ENCODE measurements at regions of chr11 and their contacts with region 1.

Region 1: DNA sequence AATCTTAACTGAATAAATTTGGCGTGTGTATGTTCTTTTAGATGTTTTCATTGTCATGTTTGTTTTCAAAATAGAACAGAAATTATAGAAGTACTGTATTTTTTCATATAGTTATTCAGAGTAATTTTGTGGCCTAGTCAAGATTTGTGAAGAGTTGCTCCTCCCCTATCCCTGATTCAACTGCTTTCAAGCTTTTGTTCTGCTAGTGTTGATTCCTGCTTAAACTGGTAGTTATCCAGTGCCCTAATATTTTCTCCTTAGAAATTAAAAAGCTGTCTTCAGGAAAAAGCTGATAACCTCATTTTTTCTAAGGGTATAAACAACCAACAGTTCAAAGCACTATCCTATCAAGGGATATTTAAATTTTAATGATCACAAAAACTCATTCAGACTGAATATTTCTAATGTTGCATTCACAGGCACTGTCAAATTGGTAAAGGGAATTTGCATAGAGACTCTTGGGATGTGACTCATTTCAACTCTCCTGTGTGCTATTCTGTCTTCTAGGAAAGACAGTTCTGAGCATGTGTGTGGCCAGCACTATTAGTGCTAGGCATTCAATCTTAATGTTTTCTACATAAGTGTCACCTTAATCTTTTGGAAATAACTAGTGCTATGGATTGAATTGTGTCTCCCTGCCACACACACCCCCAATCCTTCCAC is 1776.0 kb downstream of the LRRC4C start:
- DNase-seq: no peak
- H3K4me3 ChIP-seq: no peak overlapping the region
- H3K27ac ChIP-seq: no peak overlapping the region
- H3K4me1 ChIP-seq: no peaks in the 10 kb centered on the region
- H3K27me3 ChIP-seq: no peaks in the 10 kb centered on the region
- CTCF ChIP-seq: no peak
- POLR2A ChIP-seq: no peak

Region 2: DNA sequence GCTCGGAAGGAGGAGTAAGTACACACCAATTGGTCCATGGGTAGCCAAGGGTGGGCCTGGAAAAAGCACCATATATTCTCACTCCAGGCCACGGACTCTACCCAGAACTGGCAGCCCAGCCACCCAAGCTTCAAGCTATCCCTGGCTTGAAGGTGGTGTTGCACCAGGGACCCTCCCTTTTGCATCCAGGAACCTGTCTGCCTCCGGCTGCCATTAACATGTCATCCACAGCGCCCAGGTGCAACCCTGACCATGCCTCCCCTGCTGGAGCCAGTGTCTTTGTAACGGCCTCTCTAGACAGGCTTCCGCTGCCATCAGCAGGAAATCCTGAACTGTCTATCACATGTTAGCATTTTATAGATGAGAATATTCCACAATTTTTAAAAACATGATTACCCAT is 926.9 kb before region 1 on chr11:
- intact Hi-C with region 1: loop called (anchors 5 kb)
- DNase-seq: no peak
- H3K4me3 ChIP-seq: no peak overlapping the region
- H3K27ac ChIP-seq: no peak overlapping the region
- H3K4me1 ChIP-seq: no peaks in the 10 kb centered on the region
- H3K27me3 ChIP-seq: no peaks in the 10 kb centered on the region
- CTCF ChIP-seq: no peak
- POLR2A ChIP-seq: no peak

Region 3: GRCh38 chr11:39668640-39669039 is 14.8 kb before region 1 on chr11:
- intact Hi-C with region 1: no loop called
- DNase-seq: no peak
- H3K4me3 ChIP-seq: no peak overlapping the region
- H3K27ac ChIP-seq: no peak overlapping the region
- H3K4me1 ChIP-seq: no peaks in the 10 kb centered on the region
- H3K27me3 ChIP-seq: no peaks in the 10 kb centered on the region
- CTCF ChIP-seq: no peak
- POLR2A ChIP-seq: no peak